AG04449 (cell line): ENCODE measurements at regions of chr4 and their contacts with region 1.

Region 1: DNA sequence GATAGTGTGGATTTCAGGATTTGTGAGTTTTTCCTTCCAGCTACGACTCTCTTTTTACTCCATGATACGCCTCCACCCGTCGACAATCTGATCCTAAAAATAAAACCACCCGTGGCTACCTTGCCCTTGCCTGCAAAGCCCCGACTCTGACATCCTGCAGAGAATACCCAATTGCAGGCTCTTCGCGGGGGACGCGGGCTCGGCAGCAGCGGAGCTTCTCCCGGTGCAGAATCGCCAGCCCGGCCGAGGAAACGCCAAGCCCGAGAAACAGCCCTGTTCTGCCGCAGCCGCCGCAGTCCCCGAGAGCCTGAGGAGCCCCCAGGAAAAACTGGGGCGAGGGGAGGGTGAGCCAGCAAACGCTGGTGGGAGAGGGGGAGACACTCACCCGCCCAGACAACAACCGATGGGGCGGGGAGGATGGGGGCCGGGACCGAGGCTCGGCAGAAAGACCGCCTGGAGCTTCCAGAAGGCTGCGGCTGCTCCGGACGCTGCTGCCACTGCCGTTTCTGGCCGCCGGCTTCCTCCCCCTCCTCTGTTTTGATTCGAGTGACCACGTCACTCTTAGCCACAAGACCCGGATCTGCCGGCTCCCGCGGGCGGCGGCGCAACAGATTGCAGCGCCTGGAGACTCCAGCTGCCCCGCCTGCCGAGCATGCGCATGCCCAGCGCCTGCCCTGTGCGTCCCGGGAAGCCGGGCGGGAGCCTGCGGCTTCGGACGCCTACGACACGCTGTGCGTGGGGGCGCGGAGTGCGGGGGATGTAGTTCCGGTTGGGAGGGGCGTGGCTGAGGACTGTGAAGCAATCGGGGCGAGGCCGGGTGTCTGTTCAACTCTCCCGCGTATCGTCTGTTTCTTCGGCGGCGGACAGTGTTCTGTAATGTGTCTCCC is at the start of gene SMIM14:
- DNase-seq: peak; percentile 86
- H3K4me3 ChIP-seq: peak within 1 kb of the TSS; percentile 86
- CTCF ChIP-seq: peak; percentile 8

Region 2: DNA sequence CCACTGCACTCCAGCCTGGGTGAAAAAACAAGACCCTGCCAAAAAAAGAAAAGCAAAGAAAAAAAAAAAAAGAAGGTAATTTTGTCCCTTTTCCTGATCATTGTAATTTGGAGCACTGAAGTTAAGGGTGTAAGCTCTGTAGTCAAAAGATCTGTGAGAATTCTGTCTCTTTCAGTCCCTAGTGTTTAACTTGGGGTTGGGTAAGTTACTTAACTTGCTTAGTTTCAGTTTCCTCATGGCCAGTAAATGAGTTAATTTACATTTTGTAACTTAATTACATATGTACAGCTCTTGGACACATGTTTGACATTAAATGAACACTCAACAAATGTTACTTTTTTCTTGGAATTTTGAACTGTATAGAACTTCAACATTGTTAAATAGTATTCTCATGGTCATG is 48.4 kb after region 1 on chr4:
- CTCF ChIA-PET with region 1: no interaction called
- POLR2A ChIA-PET with region 1: no interaction called
- DNase-seq: no peak
- H3K4me3 ChIP-seq: no peak overlapping the region
- CTCF ChIP-seq: no peak

Region 3: GRCh38 chr4:39697740-39698423 is 59.3 kb after region 1 on chr4 and contains the start of gene UBE2K:
- CTCF ChIA-PET with region 1: interaction called, 4 read pairs
- POLR2A ChIA-PET with region 1: interaction called, 11 read pairs
- DNase-seq: no peak
- H3K4me3 ChIP-seq: peak within 1 kb of the TSS; percentile 97
- CTCF ChIP-seq: no peak

Region 4: GRCh38 chr4:39846120-39846519 is 207.5 kb after region 1 on chr4:
- CTCF ChIA-PET with region 1: no interaction called
- POLR2A ChIA-PET with region 1: no interaction called
- DNase-seq: no peak
- H3K4me3 ChIP-seq: no peak overlapping the region
- CTCF ChIP-seq: no peak